Dorsolateral prefrontal cortex (tissue), 120 donors: ENCODE measurements at regions of chr5 and their contacts with region 1.

Region 1: GRCh38 chr5:76867827-76868693 is 18.2 kb downstream of the S100Z start:
- DNase-seq: peak in 8 of 10 donors; percentile 9 to 79 (median 43)
- H3K4me3 ChIP-seq: peak overlapping the region in 5 of 59 donors; percentile 15 to 38 (median 22)
- H3K27ac ChIP-seq: no peak overlapping the region
- H3K27me3 ChIP-seq: no peaks in the 10 kb centered on the region
- CTCF ChIP-seq: peak; percentile 61 to 95 (median 82)

Region 2: GRCh38 chr5:77015938-77016569 is 148.0 kb after region 1 on chr5:
- intact Hi-C with region 1: loop called (anchors 1 to 5 kb)
- DNase-seq: no peak
- H3K4me3 ChIP-seq: no peak overlapping the region
- H3K27ac ChIP-seq: no peak overlapping the region
- H3K27me3 ChIP-seq: peaks cover 0 to 3% (median 0%) of the 10 kb centered on the region in 45 donors
- CTCF ChIP-seq: peak in 54 of 56 donors; percentile 38 to 80 (median 59)

Region 3: GRCh38 chr5:77086689-77087483 is 218.8 kb after region 1 on chr5 and contains the start of gene ZBED3:
- intact Hi-C with region 1: loop called in 1 of 2 experiments (anchors 5 kb)
- DNase-seq: peak; percentile 62 to 78 (median 72)
- H3K4me3 ChIP-seq: peak within 1 kb of the TSS; percentile 65 to 95 (median 86)
- H3K27ac ChIP-seq: peak within 1 kb of the TSS; percentile 83 to 99 (median 97)
- H3K27me3 ChIP-seq: no peaks in the 10 kb centered on the region
- CTCF ChIP-seq: peak in 40 of 56 donors; percentile 7 to 49 (median 32)
- total RNA-seq, gene ZBED3: 3.1 to 27.3 (median 10.4) TPM